Activated CD4-positive, alpha-beta T cell treated with anti-CD3 and anti-CD28 coated beads, Interleukin-2, amount 10 ng/mL, durations not matched to agents 24 days and 14 days (primary cell): ENCODE measurements at regions of chr3 and their contacts with region 1.

Region 1: GRCh38 chr3:152268555-152269425 is at the start of gene MBNL1:
- DNase-seq: peak; percentile 95
- H3K4me3 Mint-ChIP-seq: peak within 1 kb of the TSS; percentile 83
- H3K27ac Mint-ChIP-seq: peak within 1 kb of the TSS; percentile 94
- H3K4me1 Mint-ChIP-seq: peaks cover 47% of the 10 kb centered on the region
- H3K27me3 Mint-ChIP-seq: no peaks in the 10 kb centered on the region
- total RNA-seq, gene MBNL1: 296 and 298 TPM in 2 replicates

Region 2: GRCh38 chr3:152193673-152194267 is 75.0 kb before region 1 on chr3:
- intact Hi-C with region 1: loop called (anchors 1 kb)
- DNase-seq: peak; percentile 82
- H3K4me3 Mint-ChIP-seq: peak overlapping the region; percentile 87
- H3K27ac Mint-ChIP-seq: peak overlapping the region; percentile 96
- H3K4me1 Mint-ChIP-seq: peaks cover 68% of the 10 kb centered on the region
- H3K27me3 Mint-ChIP-seq: no peaks in the 10 kb centered on the region

Region 3: GRCh38 chr3:152258448-152259393 is 10.1 kb before region 1 on chr3:
- intact Hi-C with region 1: loop called (anchors 1 kb)
- DNase-seq: peak; percentile 89
- H3K4me3 Mint-ChIP-seq: peak overlapping the region; percentile 79
- H3K27ac Mint-ChIP-seq: peak overlapping the region; percentile 97
- H3K4me1 Mint-ChIP-seq: peaks cover 75% of the 10 kb centered on the region
- H3K27me3 Mint-ChIP-seq: no peaks in the 10 kb centered on the region

Region 4: GRCh38 chr3:152298393-152299242 is 29.8 kb after region 1 on chr3:
- intact Hi-C with region 1: loop called (anchors 1 kb)
- DNase-seq: peak; percentile 83
- H3K4me3 Mint-ChIP-seq: peak overlapping the region; percentile 88
- H3K27ac Mint-ChIP-seq: peak overlapping the region; percentile 98
- H3K4me1 Mint-ChIP-seq: peaks cover 59% of the 10 kb centered on the region
- H3K27me3 Mint-ChIP-seq: no peaks in the 10 kb centered on the region

Region 5: DNA sequence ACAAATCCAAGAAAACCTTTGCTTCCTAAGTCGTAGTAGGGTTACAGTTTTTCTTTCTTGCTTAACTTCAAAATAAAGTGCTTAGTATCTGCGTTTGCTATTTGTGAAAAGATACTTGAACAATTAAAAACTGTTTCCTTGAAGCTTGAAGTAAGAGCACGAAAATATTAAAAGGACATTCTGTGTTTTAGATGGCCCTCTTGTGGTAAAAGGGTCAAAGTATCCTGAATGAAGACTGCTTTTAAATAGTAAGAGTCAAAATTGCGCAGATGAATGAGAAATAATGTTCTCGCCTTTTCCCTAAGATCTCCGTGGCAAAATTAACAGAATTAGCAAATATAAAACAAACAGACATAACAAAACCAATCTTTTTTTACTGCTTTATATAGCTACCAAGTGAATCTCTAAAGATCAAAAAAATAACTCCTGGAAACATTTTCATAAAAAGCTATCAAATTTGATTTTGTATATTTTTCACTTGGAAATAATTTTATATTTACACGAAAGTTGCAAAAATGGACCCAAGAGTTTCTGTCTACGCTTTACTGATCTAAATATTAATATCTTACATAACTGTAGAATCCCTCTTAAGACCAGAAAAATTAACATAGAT is 175.3 kb after region 1 on chr3:
- intact Hi-C with region 1: loop called (anchors 5 kb)
- DNase-seq: no peak
- H3K4me3 Mint-ChIP-seq: no peak overlapping the region
- H3K27ac Mint-ChIP-seq: peak overlapping the region; percentile 5
- H3K4me1 Mint-ChIP-seq: peaks cover 41% of the 10 kb centered on the region
- H3K27me3 Mint-ChIP-seq: no peaks in the 10 kb centered on the region